GM13977 (cell line): ENCODE measurements at regions of chr5 and their contacts with region 1.

Region 1: GRCh38 chr5:15003511-15003920 is 131.9 kb upstream of the ANKH start:
- DNase-seq: peak; percentile 73
- CTCF ChIP-seq: peak; percentile 79

Region 2: GRCh38 chr5:14351845-14352712 is 651.4 kb before region 1 on chr5:
- in situ Hi-C with region 1: loop called (anchors 25 kb)
- DNase-seq: peak; percentile 78
- CTCF ChIP-seq: peak; percentile 96

Region 3: DNA sequence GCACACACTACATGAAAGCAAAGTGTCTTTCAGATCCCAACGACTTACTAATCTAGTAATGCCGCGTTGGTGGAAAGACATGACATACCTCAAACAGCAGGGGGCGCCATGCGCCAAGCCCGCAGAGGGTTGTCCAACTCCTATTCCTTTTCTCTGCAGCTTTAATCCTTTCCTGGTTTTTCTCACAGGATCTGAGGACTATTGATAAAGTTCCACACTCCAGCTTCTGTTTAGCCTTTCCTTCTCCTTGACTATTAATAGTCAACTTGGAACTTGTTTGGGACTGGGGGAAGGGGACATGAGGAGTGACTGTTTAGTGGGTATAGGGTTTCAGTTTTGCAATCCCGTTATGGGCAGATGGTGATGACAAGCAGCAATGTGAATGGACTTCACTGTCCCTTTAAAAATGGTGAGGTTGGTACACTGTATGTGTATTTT is 276.1 kb before region 1 on chr5:
- in situ Hi-C with region 1: loop called (anchors 10 kb)
- DNase-seq: peak; percentile 78
- CTCF ChIP-seq: peak; percentile 84

Region 4: DNA sequence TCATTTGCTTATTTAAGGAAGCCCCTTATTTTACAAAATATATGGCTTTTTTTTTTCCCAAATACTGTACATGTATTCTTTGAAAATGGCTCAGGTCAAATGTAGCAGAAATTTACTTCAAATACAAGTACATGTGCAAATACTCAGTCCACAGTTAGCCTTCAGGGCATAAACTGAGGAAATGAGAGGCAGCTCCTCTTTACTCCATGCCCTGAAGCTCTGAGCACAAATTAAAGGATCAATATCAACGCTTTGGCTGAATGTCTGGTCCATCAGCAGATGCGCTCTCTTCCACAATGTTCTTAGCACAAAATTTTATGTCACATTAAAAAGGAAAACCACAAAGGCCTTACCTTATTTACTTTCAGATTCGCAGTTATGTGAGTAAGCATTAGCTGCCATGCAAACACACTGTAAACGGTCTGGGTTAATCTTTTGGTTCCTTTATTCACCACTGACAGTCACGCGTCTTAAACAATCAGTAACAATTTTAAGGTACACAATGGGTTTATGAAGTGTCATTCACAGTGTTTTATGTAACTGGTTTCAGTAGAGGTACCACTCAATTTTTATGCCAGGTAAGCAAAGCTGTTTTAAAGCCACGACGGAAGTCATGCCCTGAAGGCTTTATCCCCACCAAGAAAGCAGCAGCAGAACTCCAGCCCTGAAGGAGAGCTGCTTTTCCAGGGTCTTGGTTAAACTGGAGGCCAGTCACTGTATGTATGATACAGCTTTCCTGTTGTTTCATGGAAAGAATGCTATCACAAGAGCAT is 235.6 kb before region 1 on chr5:
- in situ Hi-C with region 1: no loop called
- DNase-seq: peak; percentile 31
- CTCF ChIP-seq: no peak